Psoas muscle (tissue), 8 donors: ENCODE measurements at regions of chr11 and their contacts with region 1.

Region 1: GRCh38 chr11:68257475-68258362 is 14.1 kb downstream of the C11orf24 start:
- DNase-seq: peak; percentile 96 to 98
- ATAC-seq: peak; percentile 83 to 95 (median 91)
- H3K4me3 ChIP-seq: peak overlapping the region; percentile 40
- H3K27ac ChIP-seq: no peak overlapping the region
- H3K4me1 ChIP-seq: peaks cover 4% of the 10 kb centered on the region
- H3K27me3 ChIP-seq: no peaks in the 10 kb centered on the region
- CTCF ChIP-seq: peak; percentile 89

Region 2: GRCh38 chr11:68297812-68298658 is 40.3 kb after region 1 on chr11:
- intact Hi-C with region 1: loop called (anchors 1 to 2 kb)
- DNase-seq: peak; percentile 83 to 90
- ATAC-seq: peak; percentile 95 to 99 (median 96)
- H3K4me3 ChIP-seq: no peak overlapping the region
- H3K27ac ChIP-seq: no peak overlapping the region
- H3K4me1 ChIP-seq: peaks cover 6% of the 10 kb centered on the region
- H3K27me3 ChIP-seq: no peaks in the 10 kb centered on the region
- CTCF ChIP-seq: peak; percentile 98

Region 3: DNA sequence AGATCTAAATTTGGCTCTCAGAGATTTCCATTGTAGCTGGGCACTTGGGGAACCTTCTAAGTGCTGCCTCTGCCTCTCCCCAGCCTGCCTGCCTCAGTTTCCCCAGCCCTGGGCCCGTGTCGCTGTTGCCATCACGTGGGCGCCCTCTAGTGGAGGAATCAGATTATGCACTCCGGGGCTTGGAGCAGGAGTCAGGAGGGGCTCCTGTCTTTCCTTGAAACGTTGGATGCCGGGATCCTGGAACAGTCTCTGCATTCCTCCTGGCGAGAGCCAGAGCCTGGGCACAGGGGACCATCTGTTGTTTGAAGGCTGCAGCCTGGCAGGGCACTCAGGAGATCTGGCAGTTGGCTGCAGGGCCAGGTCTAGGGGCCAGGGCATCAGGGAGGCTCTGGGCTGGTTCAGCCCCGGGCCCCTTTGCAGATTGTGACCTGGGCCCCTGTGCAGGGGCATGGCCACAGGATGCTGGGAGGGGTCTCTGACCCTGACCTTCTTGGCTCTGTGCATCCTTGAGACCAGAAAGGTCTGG is 126.3 kb after region 1 on chr11:
- intact Hi-C with region 1: loop called (anchors 5 kb)
- DNase-seq: peak; percentile 67 to 80
- ATAC-seq: peak; percentile 41 to 76 (median 57)
- H3K4me3 ChIP-seq: no peak overlapping the region
- H3K27ac ChIP-seq: no peak overlapping the region
- H3K4me1 ChIP-seq: peaks cover 42% of the 10 kb centered on the region
- H3K27me3 ChIP-seq: no peaks in the 10 kb centered on the region
- CTCF ChIP-seq: peak; percentile 88

Region 4: DNA sequence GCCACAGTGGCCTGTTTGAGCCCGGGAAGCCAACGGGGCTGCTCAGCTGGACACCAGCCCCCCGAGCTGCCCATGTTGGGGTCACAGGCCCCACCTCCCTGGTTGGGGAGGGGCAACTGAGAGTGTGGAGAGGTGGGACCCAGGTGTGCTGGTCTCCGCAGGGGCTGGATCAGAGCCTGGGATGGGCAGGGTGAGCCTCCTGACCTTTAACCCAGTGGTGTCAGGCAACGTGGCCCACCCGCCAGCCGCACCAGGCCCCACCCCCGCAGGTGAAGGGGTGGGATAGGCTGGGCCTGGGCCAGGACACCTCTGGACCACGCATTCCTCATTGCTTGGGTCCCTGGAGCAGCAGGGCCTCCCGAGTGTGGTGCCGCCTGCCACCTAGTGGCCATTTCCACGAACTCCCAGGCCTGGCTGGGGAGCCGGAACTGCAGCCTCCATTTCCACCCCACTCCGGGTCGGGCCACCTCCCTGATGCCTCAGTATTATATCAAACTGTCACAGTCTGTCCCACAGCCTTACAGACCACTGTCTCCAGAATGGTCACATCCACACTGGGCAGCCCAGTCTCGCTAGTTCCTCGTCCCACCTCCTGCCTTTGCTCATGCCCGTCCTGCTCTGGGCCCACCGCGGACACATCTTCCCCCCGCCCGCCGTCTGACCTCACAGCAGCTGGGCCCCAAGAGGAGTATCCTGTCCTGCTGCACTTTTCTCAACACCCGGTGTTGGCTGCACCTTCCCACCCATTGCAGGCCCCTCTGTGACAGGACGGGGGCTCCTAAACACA is 189.5 kb after region 1 on chr11:
- intact Hi-C with region 1: loop called (anchors 1 to 5 kb)
- DNase-seq: peak; percentile 78 to 90
- ATAC-seq: peak; percentile 86 to 95 (median 90)
- H3K4me3 ChIP-seq: no peak overlapping the region
- H3K27ac ChIP-seq: no peak overlapping the region
- H3K4me1 ChIP-seq: no peaks in the 10 kb centered on the region
- H3K27me3 ChIP-seq: no peaks in the 10 kb centered on the region
- CTCF ChIP-seq: peak; percentile 95

Region 5: GRCh38 chr11:68589547-68590216 is 332.0 kb after region 1 on chr11:
- intact Hi-C with region 1: no loop called
- DNase-seq: no peak
- ATAC-seq: peak in 1 of 4 donors; percentile 25
- H3K4me3 ChIP-seq: no peak overlapping the region
- H3K27ac ChIP-seq: peak overlapping the region; percentile 34
- H3K4me1 ChIP-seq: peaks cover 10% of the 10 kb centered on the region
- H3K27me3 ChIP-seq: no peaks in the 10 kb centered on the region
- CTCF ChIP-seq: no peak